ENCODE measurements at regions of chr12 and their contacts with region 1.

Region 1: GRCh38 chr12:6688999-6689882 is at the start of gene ZNF384:
- DNase-seq: peak; percentile 83 to 98 (median 96)
- ATAC-seq: peak; percentile 91
- H3K4me3 ChIP-seq: peak within 1 kb of the TSS; percentile 84
- H3K4me3 Mint-ChIP-seq: peak within 1 kb of the TSS; percentile 85 to 100 (median 96)
- H3K27ac ChIP-seq: peak within 1 kb of the TSS; percentile 91
- H3K27ac Mint-ChIP-seq: peak within 1 kb of the TSS; percentile 93 to 99 (median 98)
- H3K4me1 ChIP-seq: peaks cover 17 to 19% of the 10 kb centered on the region in 2 donors
- H3K4me1 Mint-ChIP-seq: peaks cover 37 to 69% (median 53%) of the 10 kb centered on the region in 7 donors
- H3K27me3 ChIP-seq: no peaks in the 10 kb centered on the region
- H3K27me3 Mint-ChIP-seq: no peaks in the 10 kb centered on the region
- total RNA-seq, gene ZNF384: 62.8 to 98.2 (median 85.4) TPM

Region 2: DNA sequence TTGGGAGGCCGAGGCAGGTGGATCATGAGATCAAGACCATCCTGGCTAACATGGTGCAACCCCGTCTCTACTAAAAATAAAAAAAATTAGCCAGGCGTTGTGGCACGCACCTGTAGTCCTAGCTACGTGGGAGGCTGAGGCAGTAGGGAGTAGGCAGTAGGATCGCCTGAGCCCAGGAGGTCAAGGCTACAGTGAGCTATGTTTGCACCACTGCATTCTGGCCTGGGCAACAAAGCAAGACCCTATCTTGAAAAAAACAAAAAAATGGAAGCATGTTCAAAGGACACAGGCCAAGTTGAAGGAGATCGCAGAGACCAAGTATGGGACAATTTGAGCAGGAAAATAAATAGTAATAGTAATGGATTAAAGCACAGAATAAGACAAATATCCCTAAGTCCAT is 181.2 kb before region 1 on chr12:
- CTCF ChIA-PET with region 1: no interaction called
- POLR2A ChIA-PET with region 1: no interaction called
- intact Hi-C with region 1: no loop called
- DNase-seq: no peak
- ATAC-seq: no peak
- H3K4me3 ChIP-seq: no peak overlapping the region
- H3K4me3 Mint-ChIP-seq: no peak overlapping the region
- H3K27ac ChIP-seq: no peak overlapping the region
- H3K27ac Mint-ChIP-seq: no peak overlapping the region
- H3K4me1 ChIP-seq: no peaks in the 10 kb centered on the region
- H3K4me1 Mint-ChIP-seq: peaks cover 0 to 21% (median 6%) of the 10 kb centered on the region in 7 donors
- H3K27me3 ChIP-seq: no peaks in the 10 kb centered on the region
- H3K27me3 Mint-ChIP-seq: no peaks in the 10 kb centered on the region

Region 3: DNA sequence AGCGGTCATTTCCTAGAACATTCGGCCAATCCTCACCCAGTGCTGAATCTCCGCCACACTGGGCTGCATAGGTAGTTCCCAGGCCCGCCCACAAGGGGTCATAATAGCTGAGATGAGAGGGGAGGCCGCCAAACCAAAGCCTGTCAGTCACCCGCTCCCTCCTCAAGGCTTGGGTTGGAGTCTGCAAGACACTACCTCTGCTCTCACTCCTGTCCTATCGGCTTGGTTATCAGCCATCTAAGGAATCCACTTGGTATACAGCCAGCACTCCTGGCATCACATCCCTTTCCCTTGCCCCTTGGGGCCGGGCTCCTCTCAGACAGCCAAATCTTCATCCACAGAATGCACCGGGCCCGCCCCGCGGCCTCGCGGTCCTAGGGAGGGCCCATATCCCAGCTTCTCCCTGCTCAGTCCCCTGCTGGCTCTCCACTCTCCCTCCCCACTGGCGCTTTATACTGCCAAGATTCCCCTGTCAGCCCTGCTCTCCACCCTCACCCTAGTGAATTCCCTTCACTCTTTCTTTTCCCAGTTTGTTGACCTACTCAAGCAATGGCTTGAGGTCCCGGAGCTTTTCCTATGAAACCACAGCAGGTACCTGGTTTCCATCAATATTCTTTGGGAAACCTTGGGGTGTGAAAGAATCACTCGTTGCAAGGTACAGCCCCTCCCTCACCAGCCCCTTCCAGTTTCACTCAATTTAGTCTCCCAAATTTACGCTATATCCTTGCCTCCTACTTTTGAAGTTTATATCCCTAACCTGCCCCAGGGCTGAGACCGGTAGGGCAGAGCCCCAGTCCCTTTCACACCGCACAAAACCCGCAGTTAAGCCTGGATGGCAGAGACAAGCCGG is 134.8 kb before region 1 on chr12:
- CTCF ChIA-PET with region 1: interaction called, 5 read pairs
- POLR2A ChIA-PET with region 1: no interaction called
- intact Hi-C with region 1: loop called in 1 of 2 experiments (anchors 2 kb)
- DNase-seq: peak; percentile 38 to 57 (median 52)
- ATAC-seq: peak; percentile 67
- H3K4me3 ChIP-seq: peak overlapping the region; percentile 92
- H3K4me3 Mint-ChIP-seq: peak overlapping the region; percentile 80 to 96 (median 90)
- H3K27ac ChIP-seq: peak overlapping the region; percentile 71
- H3K27ac Mint-ChIP-seq: peak overlapping the region; percentile 14 to 88 (median 55)
- H3K4me1 ChIP-seq: peaks cover 26 to 29% of the 10 kb centered on the region in 2 donors
- H3K4me1 Mint-ChIP-seq: peaks cover 39 to 62% (median 56%) of the 10 kb centered on the region in 7 donors
- H3K27me3 ChIP-seq: no peaks in the 10 kb centered on the region
- H3K27me3 Mint-ChIP-seq: no peaks in the 10 kb centered on the region

Region 4: DNA sequence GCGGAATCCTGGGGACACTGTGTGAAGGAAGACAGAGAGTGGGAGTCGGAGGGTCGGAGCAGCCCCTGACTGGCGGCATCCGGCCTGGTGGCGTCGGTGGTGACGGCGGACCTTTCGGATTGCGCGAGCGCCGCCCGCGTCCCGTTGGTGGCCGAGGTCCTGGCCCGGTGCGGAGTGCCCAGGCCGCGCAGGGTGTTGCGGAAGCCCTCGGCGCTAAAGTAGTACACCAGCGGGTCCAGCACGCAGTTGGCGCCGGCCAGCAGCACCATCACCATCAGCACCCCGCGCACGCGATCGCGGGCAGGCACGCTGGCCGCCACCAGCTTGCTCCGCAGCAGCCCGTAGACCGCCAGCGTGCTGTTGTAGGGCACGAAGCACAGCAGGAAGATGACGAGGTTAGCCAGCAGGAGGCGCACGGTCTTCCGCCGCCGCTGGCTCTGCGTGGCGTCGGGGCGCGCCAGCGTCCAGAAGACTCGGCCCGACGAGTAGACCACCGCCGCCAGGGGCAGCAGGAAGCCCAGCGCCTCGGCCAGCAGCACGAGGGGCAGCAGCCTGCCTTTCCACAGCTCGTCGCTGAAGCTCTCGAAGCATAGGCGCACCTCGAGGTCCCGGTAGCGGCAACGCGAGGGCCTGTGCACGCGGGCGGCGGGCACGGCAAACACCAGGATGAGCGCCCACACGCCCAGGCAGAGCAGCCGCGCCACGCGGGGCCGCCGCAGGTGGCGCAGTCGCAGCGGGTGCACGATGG is 68.9 kb before region 1 on chr12:
- CTCF ChIA-PET with region 1: interaction called, 15 read pairs
- POLR2A ChIA-PET with region 1: interaction called, 4 read pairs
- intact Hi-C with region 1: loop called (anchors 1 kb)
- DNase-seq: peak in 7 of 9 donors; percentile 49 to 63 (median 60)
- ATAC-seq: peak; percentile 88
- H3K4me3 ChIP-seq: no peak overlapping the region
- H3K4me3 Mint-ChIP-seq: peak overlapping the region in 8 of 10 donors; percentile 40 to 83 (median 68)
- H3K27ac ChIP-seq: peak overlapping the region; percentile 46
- H3K27ac Mint-ChIP-seq: peak overlapping the region in 6 of 9 donors; percentile 45 to 88 (median 84)
- H3K4me1 ChIP-seq: peaks cover 0 to 5% of the 10 kb centered on the region in 2 donors
- H3K4me1 Mint-ChIP-seq: peaks cover 0 to 42% (median 26%) of the 10 kb centered on the region in 7 donors
- H3K27me3 ChIP-seq: no peaks in the 10 kb centered on the region
- H3K27me3 Mint-ChIP-seq: no peaks in the 10 kb centered on the region

Region 5: DNA sequence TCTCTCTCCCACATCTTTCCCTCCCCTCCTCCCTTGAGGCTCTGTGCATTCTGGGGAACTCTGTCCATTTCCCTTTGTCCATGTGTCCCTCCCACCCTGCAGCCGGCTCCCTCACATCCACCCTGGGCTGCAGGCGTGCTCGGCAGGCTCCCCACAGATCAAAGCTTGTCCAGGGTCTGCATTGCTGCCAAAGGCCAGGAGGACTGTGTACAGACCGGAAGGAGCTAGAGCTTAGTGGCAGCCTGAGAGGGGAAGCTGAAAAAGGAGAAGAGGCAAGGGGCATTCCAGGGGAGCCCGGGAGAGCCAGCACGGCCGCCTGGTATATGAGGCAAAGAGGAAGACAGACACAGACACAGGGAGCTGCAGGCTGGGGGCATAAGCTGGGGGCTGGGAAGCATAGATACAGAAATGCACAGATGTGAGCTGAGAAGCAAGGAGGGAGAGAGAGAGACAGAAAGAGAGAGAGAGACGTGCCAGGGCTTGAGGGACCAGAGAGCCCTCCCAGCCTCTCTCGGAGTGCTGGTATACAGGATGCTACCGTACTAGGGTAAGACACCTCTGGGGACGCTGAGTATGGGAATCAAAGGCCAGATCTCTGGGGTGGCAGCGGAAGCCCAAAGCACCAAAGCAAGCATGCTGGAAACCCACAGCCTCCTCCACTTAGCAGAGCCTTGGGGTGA is 103.4 kb after region 1 on chr12:
- CTCF ChIA-PET with region 1: no interaction called
- POLR2A ChIA-PET with region 1: interaction called, 9 read pairs
- intact Hi-C with region 1: loop called in 1 of 2 experiments (anchors 5 kb)
- DNase-seq: peak in 7 of 9 donors; percentile 66 to 79 (median 76)
- ATAC-seq: peak; percentile 76
- H3K4me3 ChIP-seq: peak overlapping the region; percentile 87
- H3K4me3 Mint-ChIP-seq: peak overlapping the region; percentile 85 to 99 (median 96)
- H3K27ac ChIP-seq: peak overlapping the region; percentile 86
- H3K27ac Mint-ChIP-seq: peak overlapping the region; percentile 88 to 99 (median 97)
- H3K4me1 ChIP-seq: peaks cover 0 to 29% of the 10 kb centered on the region in 2 donors
- H3K4me1 Mint-ChIP-seq: peaks cover 52 to 84% (median 72%) of the 10 kb centered on the region in 7 donors
- H3K27me3 ChIP-seq: no peaks in the 10 kb centered on the region
- H3K27me3 Mint-ChIP-seq: no peaks in the 10 kb centered on the region

Region 6: DNA sequence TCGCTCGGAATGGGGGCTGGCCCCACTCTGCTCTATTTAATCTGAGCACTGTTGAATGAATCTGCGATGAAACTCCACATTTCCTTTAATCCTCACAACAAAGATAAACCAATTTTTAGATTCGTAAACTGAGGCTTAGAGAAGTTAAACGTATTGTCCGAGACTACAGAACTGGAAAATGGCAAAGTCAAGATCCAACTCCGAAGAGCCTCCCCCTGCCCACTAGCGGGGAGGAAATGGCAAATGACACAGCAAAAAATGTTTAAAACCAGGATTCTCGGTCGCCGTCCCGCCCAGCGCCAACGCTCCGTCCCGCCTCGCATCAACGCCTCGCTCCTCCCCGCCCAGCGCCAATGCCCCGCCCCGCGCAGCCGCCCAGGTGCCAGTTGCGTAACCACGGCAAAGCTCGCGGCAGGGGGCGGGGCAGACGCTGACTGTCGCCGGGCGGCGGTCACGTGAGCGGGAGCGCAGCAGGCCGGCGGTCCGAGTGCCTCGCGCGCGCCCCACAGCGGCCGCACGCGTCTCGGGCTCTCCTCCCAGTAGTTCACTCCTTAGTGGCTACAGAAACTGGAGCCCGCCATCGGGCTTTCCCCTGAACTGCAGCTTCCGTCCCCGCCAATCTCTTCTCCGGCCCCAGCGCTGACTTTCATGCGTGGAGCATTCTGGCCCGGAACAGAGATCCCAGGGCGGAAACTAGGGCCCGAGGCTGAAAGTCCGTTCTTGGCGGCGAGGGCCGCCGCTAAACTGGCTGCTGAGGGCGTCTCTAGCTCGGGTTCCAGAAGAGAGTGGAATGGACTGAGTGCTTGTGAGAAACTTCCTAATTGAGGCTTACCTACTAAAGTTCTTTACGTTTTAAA is 201.8 kb after region 1 on chr12:
- CTCF ChIA-PET with region 1: no interaction called
- POLR2A ChIA-PET with region 1: no interaction called
- intact Hi-C with region 1: loop called in 1 of 2 experiments (anchors 1 kb)
- DNase-seq: peak; percentile 95 to 100 (median 97)
- ATAC-seq: peak; percentile 96
- H3K4me3 ChIP-seq: peak overlapping the region; percentile 93
- H3K4me3 Mint-ChIP-seq: peak overlapping the region; percentile 78 to 86 (median 84)
- H3K27ac ChIP-seq: peak overlapping the region; percentile 86
- H3K27ac Mint-ChIP-seq: peak overlapping the region; percentile 82 to 94 (median 90)
- H3K4me1 ChIP-seq: peaks cover 6 to 10% of the 10 kb centered on the region in 2 donors
- H3K4me1 Mint-ChIP-seq: peaks cover 0 to 31% (median 11%) of the 10 kb centered on the region in 7 donors
- H3K27me3 ChIP-seq: no peaks in the 10 kb centered on the region
- H3K27me3 Mint-ChIP-seq: no peaks in the 10 kb centered on the region

Region 7: DNA sequence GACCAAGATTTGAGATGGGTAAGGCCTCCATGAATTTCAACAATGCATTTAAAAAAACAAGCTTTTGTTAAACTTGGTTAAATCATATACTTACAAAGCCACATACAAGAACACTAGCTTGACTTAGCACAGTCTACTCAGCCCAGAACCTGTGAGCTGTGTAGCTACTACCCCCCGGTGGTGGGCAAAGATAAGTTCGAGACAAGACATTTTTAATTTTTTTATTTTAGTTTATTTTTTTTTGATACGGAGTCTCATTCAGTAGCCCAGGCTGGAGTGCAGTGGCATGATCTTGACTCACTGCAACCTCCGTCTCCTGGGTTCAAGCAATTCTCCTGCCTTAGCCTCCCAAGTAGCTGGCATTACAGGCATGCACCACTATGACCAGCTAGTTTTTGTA is 1389.2 kb after region 1 on chr12:
- CTCF ChIA-PET with region 1: no interaction called
- POLR2A ChIA-PET with region 1: no interaction called
- intact Hi-C with region 1: loop called in 1 of 2 experiments (anchors 10 kb)
- DNase-seq: peak in 8 of 9 donors; percentile 36 to 82 (median 78)
- ATAC-seq: peak; percentile 45
- H3K4me3 ChIP-seq: no peak overlapping the region
- H3K4me3 Mint-ChIP-seq: peak overlapping the region in 6 of 10 donors; percentile 18 to 49 (median 30)
- H3K27ac ChIP-seq: peak overlapping the region; percentile 94
- H3K27ac Mint-ChIP-seq: peak overlapping the region in 8 of 9 donors; percentile 86 to 100 (median 98)
- H3K4me1 ChIP-seq: peaks cover 21 to 40% of the 10 kb centered on the region in 2 donors
- H3K4me1 Mint-ChIP-seq: peaks cover 19 to 63% (median 41%) of the 10 kb centered on the region in 7 donors
- H3K27me3 ChIP-seq: no peaks in the 10 kb centered on the region
- H3K27me3 Mint-ChIP-seq: peaks cover 0 to 2% (median 0%) of the 10 kb centered on the region in 5 donors